ENCODE measurements at regions of chr11 and their contacts with region 1.

Region 1: GRCh38 chr11:19553683-19554333 is 158.8 kb upstream of the NAV2 start:
- DNase-seq: peak; percentile 62
- ATAC-seq: peak; percentile 79
- H3K4me3 ChIP-seq: no peak overlapping the region
- H3K27ac ChIP-seq: no peak overlapping the region
- H3K4me1 ChIP-seq: no peaks in the 10 kb centered on the region
- H3K27me3 ChIP-seq: peaks cover 32% of the 10 kb centered on the region
- CTCF ChIP-seq: peak; percentile 94
- POLR2A ChIP-seq: peak; percentile 40; the same call in 1 of the 2 replicates
- RAD21 ChIP-seq: peak; percentile 97

Region 2: DNA sequence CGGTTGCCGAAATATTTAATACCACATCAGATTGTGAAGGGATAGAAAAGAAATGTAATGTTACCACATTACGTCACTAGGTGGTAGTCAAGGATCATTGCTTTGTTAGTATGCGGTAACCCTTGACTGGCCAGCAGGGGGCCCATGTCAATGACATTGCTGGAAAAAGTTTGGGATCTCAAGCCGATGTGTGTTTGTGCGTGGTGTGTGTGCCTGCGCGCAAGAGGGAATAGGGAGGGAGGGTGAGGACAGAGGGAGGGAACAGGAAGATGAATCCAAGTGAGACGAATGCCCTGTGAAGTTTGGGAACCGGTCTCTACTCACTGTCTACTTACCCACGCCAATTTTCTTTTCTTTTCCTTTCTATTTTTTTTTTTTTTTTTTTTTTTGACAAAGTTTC is 482.6 kb before region 1 on chr11:
- CTCF ChIA-PET with region 1: interaction called, 5 read pairs
- POLR2A ChIA-PET with region 1: no interaction called
- dilution Hi-C with region 1: no loop called
- in situ Hi-C with region 1: no loop called
- intact Hi-C with region 1: loop called (anchors 1 kb)
- DNase-seq: peak; percentile 82
- ATAC-seq: peak; percentile 99
- H3K4me3 ChIP-seq: peak overlapping the region; percentile 26; the same call in 1 of the 2 replicates
- H3K27ac ChIP-seq: no peak overlapping the region
- H3K4me1 ChIP-seq: no peaks in the 10 kb centered on the region
- H3K27me3 ChIP-seq: peaks cover 18% of the 10 kb centered on the region
- CTCF ChIP-seq: peak; percentile 100
- POLR2A ChIP-seq: no peak
- RAD21 ChIP-seq: peak; percentile 89

Region 3: DNA sequence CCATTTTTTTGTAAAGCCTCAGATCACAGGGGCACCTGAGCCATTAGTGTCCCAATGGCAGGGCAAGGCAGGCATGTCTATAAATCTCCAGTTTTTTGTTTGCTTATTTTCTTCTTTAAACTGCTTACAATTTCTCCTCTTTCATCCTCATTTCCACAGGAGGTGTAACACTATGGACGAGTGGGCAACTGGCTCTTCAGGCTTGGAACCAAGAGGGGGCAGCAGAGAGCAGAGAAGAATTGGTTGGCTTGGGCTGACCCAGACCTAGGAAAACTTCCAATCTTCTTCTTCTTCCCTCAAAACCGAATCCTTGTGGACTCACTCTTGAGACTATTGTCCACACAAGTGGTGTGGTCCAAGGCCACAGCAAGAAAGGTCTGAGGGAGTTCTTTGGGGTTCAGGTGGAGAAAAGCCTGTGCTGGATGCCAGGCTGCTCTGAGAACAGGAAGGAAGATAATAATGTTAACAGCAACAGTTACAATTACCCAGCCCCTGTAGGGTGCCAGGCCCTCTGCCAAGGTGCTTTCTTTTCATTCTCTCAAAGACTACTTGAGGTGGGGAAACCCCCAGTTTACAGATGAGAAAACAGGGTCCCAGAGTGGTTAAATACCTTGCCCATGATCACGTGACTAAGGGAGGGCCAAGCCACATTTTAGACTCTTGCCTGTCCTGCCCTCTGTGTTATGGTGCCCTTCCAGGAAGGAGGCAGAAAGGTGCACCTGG is 242.3 kb before region 1 on chr11:
- CTCF ChIA-PET with region 1: interaction called, 3 read pairs
- POLR2A ChIA-PET with region 1: no interaction called
- dilution Hi-C with region 1: no loop called
- in situ Hi-C with region 1: loop called (anchors 5 kb)
- intact Hi-C with region 1: loop called (anchors 1 kb)
- DNase-seq: peak; percentile 50
- ATAC-seq: peak; percentile 100
- H3K4me3 ChIP-seq: no peak overlapping the region
- H3K27ac ChIP-seq: no peak overlapping the region
- H3K4me1 ChIP-seq: no peaks in the 10 kb centered on the region
- H3K27me3 ChIP-seq: peaks cover 45% of the 10 kb centered on the region
- CTCF ChIP-seq: peak; percentile 88
- POLR2A ChIP-seq: no peak
- RAD21 ChIP-seq: peak; percentile 83

Region 4: GRCh38 chr11:19432370-19433061 is 121.3 kb before region 1 on chr11:
- CTCF ChIA-PET with region 1: no interaction called
- POLR2A ChIA-PET with region 1: no interaction called
- dilution Hi-C with region 1: no loop called
- in situ Hi-C with region 1: no loop called
- intact Hi-C with region 1: loop called (anchors 5 kb)
- DNase-seq: peak; percentile 94
- ATAC-seq: peak; percentile 91
- H3K4me3 ChIP-seq: no peak overlapping the region
- H3K27ac ChIP-seq: peak overlapping the region; percentile 85
- H3K4me1 ChIP-seq: peaks cover 10% of the 10 kb centered on the region
- H3K27me3 ChIP-seq: no peaks in the 10 kb centered on the region; the same call in none of the 2 replicates
- CTCF ChIP-seq: no peak
- POLR2A ChIP-seq: no peak
- RAD21 ChIP-seq: no peak

Region 5: GRCh38 chr11:19800162-19800561 is 246.4 kb after region 1 on chr11:
- CTCF ChIA-PET with region 1: no interaction called
- POLR2A ChIA-PET with region 1: no interaction called
- dilution Hi-C with region 1: no loop called
- in situ Hi-C with region 1: no loop called
- intact Hi-C with region 1: loop called (anchors 2 kb)
- DNase-seq: no peak
- ATAC-seq: 0 out of 2 replicates have a peak, but pooled peaks have one; percentile 30
- H3K4me3 ChIP-seq: no peak overlapping the region
- H3K27ac ChIP-seq: no peak overlapping the region
- H3K4me1 ChIP-seq: peaks cover 4% of the 10 kb centered on the region; the same call in 1 of the 2 replicates
- H3K27me3 ChIP-seq: no peaks in the 10 kb centered on the region
- CTCF ChIP-seq: peak; percentile 35
- POLR2A ChIP-seq: no peak
- RAD21 ChIP-seq: peak; percentile 46

Region 6: GRCh38 chr11:20355221-20356219 is 801.7 kb after region 1 on chr11:
- CTCF ChIA-PET with region 1: no interaction called
- POLR2A ChIA-PET with region 1: no interaction called
- dilution Hi-C with region 1: no loop called
- in situ Hi-C with region 1: no loop called
- intact Hi-C with region 1: loop called (anchors 2 kb)
- DNase-seq: peak; percentile 58
- ATAC-seq: peak; percentile 92
- H3K4me3 ChIP-seq: no peak overlapping the region
- H3K27ac ChIP-seq: no peak overlapping the region
- H3K4me1 ChIP-seq: peaks cover 2% of the 10 kb centered on the region; the same call in 1 of the 2 replicates
- H3K27me3 ChIP-seq: peaks cover 15% of the 10 kb centered on the region
- CTCF ChIP-seq: peak; percentile 62
- POLR2A ChIP-seq: no peak
- RAD21 ChIP-seq: peak; percentile 36; the same call in 1 of the 2 replicates